Astrocyte of the cerebellum (primary cell): ENCODE measurements at regions of chr1 and their contacts with region 1.

Region 1: GRCh38 chr1:226461087-226461486 is 53.2 kb upstream of the PARP1 start:
- DNase-seq: no peak
- H3K4me3 ChIP-seq: no peak overlapping the region
- CTCF ChIP-seq: no peak

Region 2: GRCh38 chr1:226496453-226497015 is 35.4 kb after region 1 on chr1:
- in situ Hi-C with region 1: loop called (anchors 5 kb)
- DNase-seq: no peak
- H3K4me3 ChIP-seq: no peak overlapping the region
- CTCF ChIP-seq: no peak